ENCODE measurements at regions of chr21 and their contacts with region 1.

Region 1: GRCh38 chr21:17925000-17925610 is 105.9 kb upstream of the C21orf91 start:
- DNase-seq: peak; percentile 84
- H3K4me3 Mint-ChIP-seq: no peak overlapping the region
- H3K27ac Mint-ChIP-seq: no peak overlapping the region
- H3K4me1 Mint-ChIP-seq: peaks cover 32% of the 10 kb centered on the region
- H3K27me3 Mint-ChIP-seq: no peaks in the 10 kb centered on the region
- CTCF ChIP-seq: peak; percentile 73

Region 2: DNA sequence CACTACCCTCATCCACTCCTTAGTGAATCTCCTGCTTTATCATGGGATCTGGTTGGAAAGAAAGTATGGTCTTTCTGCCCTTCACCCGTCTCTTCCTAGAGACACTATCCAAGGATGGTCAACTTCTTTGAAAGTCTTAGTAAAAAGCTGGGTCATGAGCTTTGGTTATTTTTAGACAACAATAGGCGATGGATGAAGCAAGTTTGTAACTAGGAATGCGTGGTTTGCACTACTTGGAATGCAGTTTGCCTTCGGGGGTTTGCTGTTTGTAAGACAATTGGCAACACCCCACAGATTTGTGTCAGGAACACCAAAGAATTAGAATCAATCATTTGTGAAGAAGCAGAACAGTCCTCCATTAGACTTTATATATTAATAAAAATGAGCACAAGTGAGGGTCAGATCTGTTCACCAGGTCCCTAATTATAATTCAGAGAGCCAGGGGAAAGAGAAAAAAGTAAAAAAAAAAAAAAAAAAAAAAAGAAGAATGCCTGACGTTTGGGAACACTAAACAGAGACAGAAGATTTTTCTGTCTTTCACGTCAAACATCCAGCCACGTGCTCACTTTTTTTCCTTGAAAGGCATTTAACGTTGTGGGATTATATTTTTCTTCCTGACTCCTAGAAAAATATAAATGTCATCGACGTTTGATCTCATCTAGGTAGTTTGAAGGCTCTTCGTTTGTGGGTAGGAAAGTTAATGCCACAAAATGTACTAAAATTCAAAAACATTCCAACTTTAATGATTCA is 251.7 kb before region 1 on chr21:
- CTCF ChIA-PET with region 1: interaction called, 81 read pairs
- POLR2A ChIA-PET with region 1: interaction called, 6 read pairs
- intact Hi-C with region 1: no loop called
- DNase-seq: peak; percentile 76
- H3K4me3 Mint-ChIP-seq: no peak overlapping the region
- H3K27ac Mint-ChIP-seq: peak overlapping the region; percentile 68
- H3K4me1 Mint-ChIP-seq: peaks cover 13% of the 10 kb centered on the region
- H3K27me3 Mint-ChIP-seq: no peaks in the 10 kb centered on the region
- CTCF ChIP-seq: no peak

Region 3: GRCh38 chr21:17819114-17819876 is 105.8 kb before region 1 on chr21 and contains the start of gene C21orf91:
- CTCF ChIA-PET with region 1: interaction called, 16 read pairs
- POLR2A ChIA-PET with region 1: interaction called, 24 read pairs
- intact Hi-C with region 1: no loop called
- DNase-seq: peak; percentile 80
- H3K4me3 Mint-ChIP-seq: peak within 1 kb of the TSS; percentile 82
- H3K27ac Mint-ChIP-seq: peak within 1 kb of the TSS; percentile 100
- H3K4me1 Mint-ChIP-seq: peaks cover 6% of the 10 kb centered on the region
- H3K27me3 Mint-ChIP-seq: no peaks in the 10 kb centered on the region
- CTCF ChIP-seq: no peak
- total RNA-seq, gene C21orf91: 21.0 and 22.1 TPM in 2 replicates

Region 4: GRCh38 chr21:17903029-17903806 is 21.9 kb before region 1 on chr21:
- CTCF ChIA-PET with region 1: interaction called, 34 read pairs
- POLR2A ChIA-PET with region 1: interaction called, 3 read pairs
- intact Hi-C with region 1: no loop called
- DNase-seq: peak; percentile 45
- H3K4me3 Mint-ChIP-seq: no peak overlapping the region
- H3K27ac Mint-ChIP-seq: no peak overlapping the region
- H3K4me1 Mint-ChIP-seq: peaks cover 12% of the 10 kb centered on the region
- H3K27me3 Mint-ChIP-seq: no peaks in the 10 kb centered on the region
- CTCF ChIP-seq: peak; percentile 9

Region 5: GRCh38 chr21:17964716-17965115 is 39.6 kb after region 1 on chr21:
- CTCF ChIA-PET with region 1: interaction called, 13 read pairs
- POLR2A ChIA-PET with region 1: no interaction called
- intact Hi-C with region 1: no loop called
- DNase-seq: no peak
- H3K4me3 Mint-ChIP-seq: no peak overlapping the region
- H3K27ac Mint-ChIP-seq: no peak overlapping the region
- H3K4me1 Mint-ChIP-seq: no peaks in the 10 kb centered on the region
- H3K27me3 Mint-ChIP-seq: no peaks in the 10 kb centered on the region
- CTCF ChIP-seq: no peak

Region 6: GRCh38 chr21:18265944-18266343 is 340.8 kb after region 1 on chr21:
- CTCF ChIA-PET with region 1: interaction called, 22 read pairs
- POLR2A ChIA-PET with region 1: no interaction called
- intact Hi-C with region 1: loop called (anchors 2 kb)
- DNase-seq: no peak
- H3K4me3 Mint-ChIP-seq: no peak overlapping the region
- H3K27ac Mint-ChIP-seq: no peak overlapping the region
- H3K4me1 Mint-ChIP-seq: no peaks in the 10 kb centered on the region
- H3K27me3 Mint-ChIP-seq: no peaks in the 10 kb centered on the region
- CTCF ChIP-seq: peak; percentile 31

Measured in MCF 10A (cell line).